Activated CD4-positive, alpha-beta T cell treated with anti-CD3 and anti-CD28 coated beads, Interleukin-2, amount 10 ng/mL, durations not matched to agents 24 days and 14 days (primary cell): ENCODE measurements at regions of chr3 and their contacts with region 1.

Region 1: DNA sequence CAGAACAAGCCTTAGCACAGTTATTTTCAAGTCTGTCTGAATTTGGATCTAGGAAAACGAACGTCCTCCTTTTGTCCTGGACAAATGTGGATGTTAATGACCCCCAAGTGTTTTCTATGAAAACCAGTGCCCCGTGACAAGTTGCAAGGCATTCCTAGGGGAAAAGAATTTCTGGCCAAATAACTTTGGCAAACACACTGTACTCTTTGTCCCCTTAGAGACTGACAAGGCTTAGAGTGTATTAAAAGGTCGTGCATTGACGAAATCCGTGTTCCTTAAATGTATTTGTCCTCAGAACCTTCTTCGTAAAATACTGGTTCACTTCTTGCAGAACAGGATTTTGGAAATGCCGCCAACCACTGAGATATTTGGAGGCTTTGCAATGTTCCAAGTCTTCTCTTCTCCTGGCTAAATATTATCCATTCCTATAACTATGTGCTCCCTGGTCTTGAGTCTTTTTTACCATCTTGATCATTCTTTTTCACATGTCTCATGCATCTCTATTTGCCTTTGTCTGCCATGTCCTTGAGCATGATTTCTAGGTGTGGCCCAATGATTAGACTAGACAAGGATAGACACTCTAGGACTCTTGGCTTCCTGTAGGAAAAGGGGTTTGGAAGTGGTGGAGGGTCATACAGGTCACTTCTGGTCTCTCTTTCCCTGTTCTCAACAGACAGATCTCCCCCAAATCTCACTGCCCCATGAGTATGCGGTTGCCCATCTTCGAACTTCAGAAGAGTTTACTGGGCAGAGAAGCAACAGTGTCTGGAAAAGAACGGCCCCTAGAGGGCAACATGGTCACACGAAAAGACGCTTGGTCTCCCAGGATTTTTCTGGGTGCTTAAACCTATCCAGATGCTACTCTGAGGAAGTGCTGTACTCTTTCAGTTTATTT is 117.5 kb downstream of the EDEM1 start:
- DNase-seq: peak; percentile 71
- H3K4me3 Mint-ChIP-seq: no peak overlapping the region
- H3K27ac Mint-ChIP-seq: no peak overlapping the region
- H3K4me1 Mint-ChIP-seq: no peaks in the 10 kb centered on the region
- H3K27me3 Mint-ChIP-seq: peaks cover 4% of the 10 kb centered on the region

Region 2: GRCh38 chr3:5232570-5232969 is 72.5 kb before region 1 on chr3:
- intact Hi-C with region 1: no loop called
- DNase-seq: no peak
- H3K4me3 Mint-ChIP-seq: no peak overlapping the region
- H3K27ac Mint-ChIP-seq: no peak overlapping the region
- H3K4me1 Mint-ChIP-seq: no peaks in the 10 kb centered on the region
- H3K27me3 Mint-ChIP-seq: peaks cover 8% of the 10 kb centered on the region

Region 3: DNA sequence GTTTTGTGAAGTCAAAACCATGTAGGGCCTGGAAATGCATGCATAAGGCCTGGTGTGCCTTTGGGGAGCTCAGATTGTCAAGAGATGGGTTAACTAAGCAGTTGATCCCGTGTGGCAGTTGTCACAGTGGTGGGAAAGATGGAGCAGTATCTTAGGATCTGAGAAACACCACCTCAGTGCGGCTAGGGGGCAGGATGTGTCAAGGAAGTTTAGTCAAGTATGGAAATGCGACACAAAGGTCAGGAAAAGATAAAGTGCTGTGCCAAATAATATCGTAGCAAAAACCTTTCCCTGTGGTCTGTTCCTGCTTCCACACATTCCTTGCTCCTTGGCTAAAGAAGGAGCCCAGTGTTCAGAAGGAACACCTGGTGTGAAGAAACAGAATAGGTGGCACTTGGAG is 278.9 kb after region 1 on chr3:
- intact Hi-C with region 1: no loop called
- DNase-seq: no peak
- H3K4me3 Mint-ChIP-seq: no peak overlapping the region
- H3K27ac Mint-ChIP-seq: no peak overlapping the region
- H3K4me1 Mint-ChIP-seq: no peaks in the 10 kb centered on the region
- H3K27me3 Mint-ChIP-seq: no peaks in the 10 kb centered on the region

Region 4: GRCh38 chr3:5731094-5731493 is 426.1 kb after region 1 on chr3:
- intact Hi-C with region 1: loop called (anchors 10 kb)
- DNase-seq: no peak
- H3K4me3 Mint-ChIP-seq: no peak overlapping the region
- H3K27ac Mint-ChIP-seq: no peak overlapping the region
- H3K4me1 Mint-ChIP-seq: no peaks in the 10 kb centered on the region
- H3K27me3 Mint-ChIP-seq: no peaks in the 10 kb centered on the region